ENCODE measurements at regions of chr10 and their contacts with region 1.

Region 1: DNA sequence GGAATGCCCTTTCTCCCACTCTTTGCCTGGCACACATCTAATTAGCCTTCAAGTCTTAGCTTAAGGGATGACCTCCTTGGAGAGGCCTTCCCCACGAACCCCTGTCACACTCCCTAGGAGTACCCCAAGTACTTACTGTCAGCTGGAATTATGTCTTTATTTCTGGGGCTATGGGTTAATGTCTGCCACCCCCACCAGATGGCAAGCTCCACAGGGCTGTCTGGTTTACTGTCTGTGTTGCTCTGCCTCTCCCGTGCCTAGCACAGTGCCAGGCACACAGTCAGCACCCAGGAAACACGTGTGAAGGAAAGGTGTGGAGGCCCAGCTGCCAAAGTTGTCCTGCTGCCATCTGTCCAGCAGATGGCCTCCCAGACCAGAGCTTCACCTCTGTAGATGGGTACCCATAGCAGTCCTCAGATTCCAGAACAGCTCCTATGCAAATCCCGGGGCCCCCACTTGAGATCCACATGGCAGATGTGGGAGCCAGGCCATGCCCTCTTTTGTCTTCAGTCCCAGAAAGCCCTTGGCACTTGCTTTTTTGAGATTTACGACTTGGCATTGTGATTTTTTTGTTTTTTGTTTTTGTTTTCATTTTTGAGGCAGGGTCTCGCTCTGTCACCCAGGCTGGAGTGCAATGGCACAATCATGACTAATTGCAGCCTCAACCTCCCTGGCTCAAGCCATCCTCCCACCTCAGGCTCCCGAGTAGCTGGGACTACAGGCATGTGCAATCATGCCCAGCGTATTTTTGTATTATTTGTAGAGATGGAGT is 17.2 kb upstream of the PALD1 start:
- DNase-seq: peak; percentile 74
- ATAC-seq: peak; percentile 55
- H3K4me3 Mint-ChIP-seq: no peak overlapping the region
- H3K27ac Mint-ChIP-seq: no peak overlapping the region
- H3K4me1 Mint-ChIP-seq: peaks cover 47% of the 10 kb centered on the region
- H3K27me3 Mint-ChIP-seq: peaks cover 45% of the 10 kb centered on the region
- CTCF ChIP-seq: peak; percentile 79

Region 2: DNA sequence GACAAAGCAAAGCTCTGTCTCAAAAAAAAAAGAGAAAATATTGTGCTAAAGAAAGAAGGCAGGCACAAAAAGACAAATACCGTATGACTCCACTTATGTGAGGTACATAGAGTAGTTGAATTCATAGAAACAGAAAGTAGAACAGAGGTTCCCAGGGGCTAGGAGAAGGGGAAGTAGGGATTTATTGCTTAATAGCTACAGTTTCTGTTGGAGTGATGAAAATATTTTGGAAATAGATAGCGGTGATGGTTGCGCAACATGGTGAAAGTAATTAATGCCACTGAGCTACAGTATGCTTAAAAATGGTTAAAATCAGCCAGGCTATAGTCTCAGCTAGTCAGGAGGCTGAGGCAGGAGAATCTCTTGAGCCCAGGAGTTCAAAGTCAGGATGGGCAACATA is 159.1 kb before region 1 on chr10:
- CTCF ChIA-PET with region 1: no interaction called
- POLR2A ChIA-PET with region 1: no interaction called
- DNase-seq: no peak
- ATAC-seq: no peak
- H3K4me3 Mint-ChIP-seq: no peak overlapping the region
- H3K27ac Mint-ChIP-seq: no peak overlapping the region
- H3K4me1 Mint-ChIP-seq: no peaks in the 10 kb centered on the region
- H3K27me3 Mint-ChIP-seq: no peaks in the 10 kb centered on the region
- CTCF ChIP-seq: no peak

Region 3: GRCh38 chr10:70425096-70425495 is 36.3 kb before region 1 on chr10:
- CTCF ChIA-PET with region 1: interaction called, 25 read pairs
- POLR2A ChIA-PET with region 1: no interaction called
- DNase-seq: no peak
- ATAC-seq: no peak
- H3K4me3 Mint-ChIP-seq: no peak overlapping the region
- H3K27ac Mint-ChIP-seq: no peak overlapping the region
- H3K4me1 Mint-ChIP-seq: peaks cover 45% of the 10 kb centered on the region
- H3K27me3 Mint-ChIP-seq: no peaks in the 10 kb centered on the region
- CTCF ChIP-seq: no peak

Region 4: DNA sequence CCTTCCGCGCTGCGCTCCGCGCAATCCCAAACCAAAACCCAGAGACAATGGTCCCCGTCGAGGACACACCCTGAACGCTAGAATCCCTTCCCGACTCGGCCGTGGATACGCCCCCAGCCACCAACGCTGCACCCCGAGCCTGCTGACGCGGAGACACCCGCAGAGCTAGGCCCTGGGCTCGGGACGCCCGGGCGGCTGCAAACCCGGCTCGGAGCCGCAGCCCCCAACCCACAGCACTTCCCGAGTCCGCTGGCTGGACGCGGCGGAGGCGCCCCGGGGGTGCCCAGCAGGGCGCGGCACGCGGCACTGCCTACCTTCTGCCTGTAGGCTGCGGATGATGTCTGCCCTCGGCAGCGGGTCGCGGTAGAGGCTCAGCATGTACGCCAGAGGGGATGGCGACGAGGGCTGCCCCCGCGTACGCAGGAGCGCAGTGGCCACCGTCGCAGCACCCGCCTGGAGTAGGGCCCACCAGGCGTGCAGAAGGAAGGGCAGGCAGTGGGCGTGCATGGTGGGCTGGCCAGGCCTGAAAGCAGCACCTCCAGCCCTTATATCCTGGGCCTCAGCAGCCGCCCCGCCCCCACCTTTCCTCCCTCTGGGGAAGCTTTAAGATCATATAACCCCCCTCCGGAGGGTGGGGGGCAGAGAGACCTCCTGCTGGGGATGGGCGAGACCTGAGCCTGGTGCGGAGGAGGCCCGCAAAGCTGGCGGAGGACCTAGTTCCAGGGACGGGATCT is 20.1 kb before region 1 on chr10 and contains the start of gene NODAL:
- CTCF ChIA-PET with region 1: interaction called, 19 read pairs
- POLR2A ChIA-PET with region 1: interaction called, 16 read pairs
- DNase-seq: peak; percentile 59
- ATAC-seq: peak; percentile 5
- H3K4me3 Mint-ChIP-seq: peak within 1 kb of the TSS; percentile 77
- H3K27ac Mint-ChIP-seq: peak within 1 kb of the TSS; percentile 95
- H3K4me1 Mint-ChIP-seq: peaks cover 72% of the 10 kb centered on the region
- H3K27me3 Mint-ChIP-seq: peaks cover 19% of the 10 kb centered on the region
- CTCF ChIP-seq: no peak
- total RNA-seq, gene NODAL: 41.1 to 57.0 TPM (median 41.5 TPM) in 3 replicates

Region 5: DNA sequence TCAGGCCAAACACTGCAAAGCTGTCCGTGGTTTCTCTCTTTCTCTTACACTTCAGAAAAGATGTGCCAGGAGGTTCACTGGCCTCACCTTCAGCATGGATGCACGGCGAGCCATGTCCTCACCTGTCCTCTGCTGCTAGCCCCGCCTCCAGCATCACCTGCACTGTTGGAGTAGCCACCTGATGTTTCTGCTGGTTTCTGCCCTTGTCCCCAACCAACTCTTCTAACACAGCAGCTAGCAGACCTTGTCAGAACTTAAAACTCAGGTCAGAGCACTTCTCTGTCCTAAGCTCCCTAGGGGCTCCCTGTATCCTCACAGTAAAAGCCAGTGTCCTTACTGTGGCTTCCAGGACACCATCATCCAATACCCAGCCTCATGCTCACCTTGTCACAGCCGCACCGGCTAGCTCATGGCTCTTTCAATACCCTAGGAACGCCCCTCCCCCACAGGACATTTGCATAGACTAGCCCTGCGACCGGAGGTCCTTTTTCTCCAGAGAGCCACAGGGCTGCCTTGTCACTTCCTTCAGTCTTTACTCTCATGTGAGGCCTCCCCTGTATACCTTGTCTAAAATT is 32.3 kb after region 1 on chr10:
- CTCF ChIA-PET with region 1: interaction called, 11 read pairs
- POLR2A ChIA-PET with region 1: no interaction called
- DNase-seq: peak; percentile 84
- ATAC-seq: peak; percentile 94
- H3K4me3 Mint-ChIP-seq: peak overlapping the region; percentile 5; the same call in 1 of the 2 replicates
- H3K27ac Mint-ChIP-seq: peak overlapping the region; percentile 97
- H3K4me1 Mint-ChIP-seq: peaks cover 67% of the 10 kb centered on the region
- H3K27me3 Mint-ChIP-seq: no peaks in the 10 kb centered on the region
- CTCF ChIP-seq: no peak

Region 6: DNA sequence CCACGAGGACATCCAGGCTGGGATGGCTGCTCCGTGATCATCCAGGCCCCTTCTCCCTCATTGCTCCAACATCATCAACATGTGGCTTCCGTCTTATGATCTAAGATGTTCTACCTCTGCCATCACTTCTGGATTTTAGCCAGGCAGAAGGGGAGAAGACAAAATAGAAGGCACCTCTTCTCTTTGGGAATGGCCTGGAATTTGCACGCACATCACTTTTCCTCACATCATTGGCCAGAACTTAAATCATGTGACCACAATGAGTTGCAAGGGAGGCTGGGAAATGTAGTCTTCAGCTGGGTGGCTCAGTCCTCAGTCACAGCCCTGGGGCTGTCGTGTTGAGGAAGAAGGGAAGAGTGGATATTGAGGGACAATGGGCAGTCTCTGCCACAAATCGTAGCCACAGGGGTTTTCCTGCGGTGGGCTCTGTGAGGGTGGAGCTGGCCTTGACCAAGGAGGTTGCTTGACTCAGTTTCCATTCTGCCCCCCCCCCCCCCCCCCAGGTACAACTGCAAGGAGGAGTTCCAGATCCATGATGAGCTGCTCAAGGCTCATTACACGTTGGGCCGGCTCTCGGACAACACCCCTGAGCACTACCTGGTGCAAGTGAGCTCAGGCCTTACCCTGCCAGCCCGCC is 67.4 kb after region 1 on chr10:
- CTCF ChIA-PET with region 1: interaction called, 34 read pairs
- POLR2A ChIA-PET with region 1: no interaction called
- DNase-seq: peak; percentile 40
- ATAC-seq: peak; percentile 91
- H3K4me3 Mint-ChIP-seq: no peak overlapping the region
- H3K27ac Mint-ChIP-seq: no peak overlapping the region
- H3K4me1 Mint-ChIP-seq: peaks cover 3% of the 10 kb centered on the region; the same call in 1 of the 2 replicates
- H3K27me3 Mint-ChIP-seq: no peaks in the 10 kb centered on the region
- CTCF ChIP-seq: no peak

Region 7: GRCh38 chr10:70549962-70550458 is 88.6 kb after region 1 on chr10:
- CTCF ChIA-PET with region 1: interaction called, 16 read pairs
- POLR2A ChIA-PET with region 1: no interaction called
- DNase-seq: peak; percentile 83
- ATAC-seq: peak; percentile 90
- H3K4me3 Mint-ChIP-seq: no peak overlapping the region
- H3K27ac Mint-ChIP-seq: peak overlapping the region; percentile 55; the same call in 1 of the 2 replicates
- H3K4me1 Mint-ChIP-seq: peaks cover 9% of the 10 kb centered on the region; the same call in 1 of the 2 replicates
- H3K27me3 Mint-ChIP-seq: no peaks in the 10 kb centered on the region
- CTCF ChIP-seq: peak; percentile 91